PC-3 (cell line): ENCODE measurements at regions of chr14 and their contacts with region 1.

Region 1: DNA sequence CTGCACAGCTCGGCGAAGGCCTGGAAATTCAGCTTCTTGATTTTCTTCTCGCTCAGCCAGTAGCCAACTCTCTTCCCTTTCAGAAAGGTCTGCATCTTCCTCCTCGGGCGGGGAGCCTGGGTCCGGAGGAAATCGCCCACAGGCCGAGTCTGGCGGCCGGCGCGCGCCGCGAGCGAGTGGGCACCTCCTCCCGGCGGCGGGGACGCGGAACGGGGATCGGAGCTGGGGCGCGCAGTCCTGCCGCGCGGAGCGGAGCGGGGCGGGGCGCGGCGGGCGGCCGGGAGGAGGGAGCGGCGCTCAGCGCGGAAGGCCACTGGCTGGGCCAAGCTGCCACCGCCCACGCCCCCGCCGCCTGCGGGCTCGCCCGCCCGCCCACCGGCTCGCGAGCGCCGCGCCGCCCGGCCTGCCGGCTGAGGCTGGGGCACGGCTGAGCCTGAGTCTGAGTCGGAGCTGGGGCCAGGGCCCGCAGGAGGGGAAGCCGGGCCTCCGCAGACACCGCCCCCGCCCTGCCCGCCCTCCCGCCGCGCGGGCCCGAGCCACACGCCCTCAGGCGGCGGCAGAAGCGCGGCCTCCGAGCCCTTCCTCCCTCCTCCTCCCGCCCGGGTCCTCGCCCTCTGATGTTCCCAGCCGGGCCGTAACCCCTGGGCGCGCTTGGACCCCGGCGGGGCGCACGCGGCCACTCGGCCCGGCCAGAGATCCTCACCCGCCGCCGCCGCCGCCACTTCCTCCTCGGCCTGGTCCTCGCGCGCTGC is 480 bp downstream of the ITPK1 start:
- DNase-seq: peak; percentile 87
- ATAC-seq: peak; percentile 84
- H3K4me3 ChIP-seq: peak overlapping the region; percentile 94
- H3K27ac ChIP-seq: no peak overlapping the region
- H3K4me1 ChIP-seq: peaks cover 21% of the 10 kb centered on the region
- H3K27me3 ChIP-seq: no peaks in the 10 kb centered on the region
- CTCF ChIP-seq: no peak

Region 2: DNA sequence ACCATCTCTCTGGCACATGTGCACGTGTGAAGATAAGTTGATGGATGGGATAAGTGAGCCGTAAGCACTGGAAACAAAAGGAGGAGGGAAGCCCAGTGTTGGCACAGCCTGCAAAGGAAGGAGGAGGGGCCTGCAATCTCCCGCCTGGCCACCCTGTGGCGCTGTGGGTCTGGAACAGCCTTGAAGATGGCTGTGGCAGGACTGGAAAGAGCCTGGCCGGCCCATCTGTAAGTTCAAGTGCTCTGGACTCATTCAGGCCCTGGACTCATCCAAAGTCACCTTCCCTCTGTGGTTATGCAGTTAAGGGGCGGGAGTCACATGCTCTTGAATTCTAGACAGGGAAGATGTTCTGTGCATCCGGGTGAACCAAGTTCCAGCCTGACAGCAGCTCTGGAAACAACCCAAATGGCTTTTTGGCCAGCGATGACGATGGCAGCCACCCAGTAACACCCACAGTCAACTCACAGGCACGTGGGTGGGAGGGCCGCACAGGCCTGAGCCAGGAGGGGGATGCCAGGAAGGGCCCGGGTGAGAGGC is 141.9 kb before region 1 on chr14:
- CTCF ChIA-PET with region 1: no interaction called
- POLR2A ChIA-PET with region 1: no interaction called
- intact Hi-C with region 1: no loop called
- DNase-seq: peak; percentile 73
- ATAC-seq: peak; percentile 42
- H3K4me3 ChIP-seq: no peak overlapping the region
- H3K27ac ChIP-seq: no peak overlapping the region
- H3K4me1 ChIP-seq: no peaks in the 10 kb centered on the region
- H3K27me3 ChIP-seq: no peaks in the 10 kb centered on the region
- CTCF ChIP-seq: peak; percentile 81

Region 3: DNA sequence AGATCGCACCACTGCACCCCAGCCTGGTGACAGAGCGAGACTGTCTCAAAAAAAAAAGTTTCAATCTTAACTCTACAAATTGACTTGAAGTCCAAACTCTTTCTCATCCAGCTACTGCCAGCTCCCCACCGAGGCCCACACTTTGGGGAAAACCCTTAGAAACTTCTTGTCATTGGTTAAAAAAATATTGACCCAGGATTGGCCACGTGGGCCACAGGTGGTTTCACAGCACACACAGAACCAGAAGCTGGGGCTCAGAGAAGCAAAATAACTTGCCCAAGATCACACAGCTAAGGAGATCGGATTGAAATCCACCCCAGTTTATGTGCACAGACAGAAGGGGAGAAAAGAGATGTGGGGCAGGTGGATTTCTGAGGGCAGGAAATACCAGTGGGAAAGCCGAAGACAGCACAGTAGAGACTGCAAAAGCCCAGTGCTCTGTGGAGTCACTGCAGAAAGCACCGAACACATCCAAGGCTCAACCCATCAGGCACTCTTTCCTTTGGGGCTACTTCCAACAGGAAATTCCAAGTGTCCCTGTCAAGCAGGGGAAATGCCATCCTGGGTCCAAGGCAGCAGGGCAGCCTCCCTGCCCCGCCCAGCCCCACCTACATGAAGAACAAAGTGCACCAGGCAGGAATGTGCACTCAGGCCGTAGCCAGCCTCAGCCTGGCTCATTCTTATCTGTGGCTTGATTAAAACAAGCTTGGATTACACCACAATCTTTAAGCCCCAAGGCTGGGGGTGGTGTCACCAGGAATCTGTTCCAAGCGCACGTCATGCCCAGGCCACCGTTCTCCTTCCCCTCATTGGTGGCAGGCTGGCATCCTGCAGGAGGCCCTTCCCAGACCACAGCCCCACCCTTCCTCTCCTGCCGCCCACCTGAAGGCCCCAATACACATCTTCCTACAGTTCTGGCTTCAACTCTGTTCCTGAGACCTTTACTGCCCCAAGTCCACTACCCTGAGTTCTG is 72.0 kb before region 1 on chr14:
- CTCF ChIA-PET with region 1: no interaction called
- POLR2A ChIA-PET with region 1: no interaction called
- intact Hi-C with region 1: loop called (anchors 1 kb)
- DNase-seq: peak; percentile 98
- ATAC-seq: peak; percentile 92
- H3K4me3 ChIP-seq: peak overlapping the region; percentile 50; the same call in 1 of the 2 replicates
- H3K27ac ChIP-seq: peak overlapping the region; percentile 100
- H3K4me1 ChIP-seq: peaks cover 72% of the 10 kb centered on the region
- H3K27me3 ChIP-seq: no peaks in the 10 kb centered on the region
- CTCF ChIP-seq: no peak

Region 4: GRCh38 chr14:93137864-93138263 is 22.6 kb after region 1 on chr14:
- CTCF ChIA-PET with region 1: interaction called, 15 read pairs
- POLR2A ChIA-PET with region 1: interaction called, 6 read pairs
- intact Hi-C with region 1: loop called (anchors 1 kb)
- DNase-seq: peak; percentile 28
- ATAC-seq: peak; percentile 22
- H3K4me3 ChIP-seq: no peak overlapping the region
- H3K27ac ChIP-seq: no peak overlapping the region
- H3K4me1 ChIP-seq: no peaks in the 10 kb centered on the region; the same call in 1 of the 2 replicates
- H3K27me3 ChIP-seq: no peaks in the 10 kb centered on the region
- CTCF ChIP-seq: peak; percentile 25; the same call in 1 of the 2 replicates

Region 5: GRCh38 chr14:93219103-93219726 is 104.0 kb after region 1 on chr14:
- CTCF ChIA-PET with region 1: interaction called, 8 read pairs
- POLR2A ChIA-PET with region 1: no interaction called
- intact Hi-C with region 1: loop called (anchors 1 kb)
- DNase-seq: peak; percentile 74
- ATAC-seq: peak; percentile 88
- H3K4me3 ChIP-seq: no peak overlapping the region
- H3K27ac ChIP-seq: no peak overlapping the region
- H3K4me1 ChIP-seq: no peaks in the 10 kb centered on the region
- H3K27me3 ChIP-seq: no peaks in the 10 kb centered on the region
- CTCF ChIP-seq: peak; percentile 88